CD8-positive, alpha-beta T cell (primary cell): ENCODE measurements at regions of chr15 and their contacts with region 1.

Region 1: GRCh38 chr15:82900511-82901060 is 51.9 kb downstream of the HOMER2 start:
- DNase-seq: no peak
- ATAC-seq: no peak
- H3K4me3 ChIP-seq: no peak overlapping the region
- H3K4me3 Mint-ChIP-seq: no peak overlapping the region
- H3K27ac ChIP-seq: no peak overlapping the region
- H3K27ac Mint-ChIP-seq: no peak overlapping the region
- H3K4me1 ChIP-seq: no peaks in the 10 kb centered on the region
- H3K4me1 Mint-ChIP-seq: no peaks in the 10 kb centered on the region
- H3K27me3 ChIP-seq: no peaks in the 10 kb centered on the region
- H3K27me3 Mint-ChIP-seq: no peaks in the 10 kb centered on the region
- CTCF ChIP-seq: no peak

Region 2: DNA sequence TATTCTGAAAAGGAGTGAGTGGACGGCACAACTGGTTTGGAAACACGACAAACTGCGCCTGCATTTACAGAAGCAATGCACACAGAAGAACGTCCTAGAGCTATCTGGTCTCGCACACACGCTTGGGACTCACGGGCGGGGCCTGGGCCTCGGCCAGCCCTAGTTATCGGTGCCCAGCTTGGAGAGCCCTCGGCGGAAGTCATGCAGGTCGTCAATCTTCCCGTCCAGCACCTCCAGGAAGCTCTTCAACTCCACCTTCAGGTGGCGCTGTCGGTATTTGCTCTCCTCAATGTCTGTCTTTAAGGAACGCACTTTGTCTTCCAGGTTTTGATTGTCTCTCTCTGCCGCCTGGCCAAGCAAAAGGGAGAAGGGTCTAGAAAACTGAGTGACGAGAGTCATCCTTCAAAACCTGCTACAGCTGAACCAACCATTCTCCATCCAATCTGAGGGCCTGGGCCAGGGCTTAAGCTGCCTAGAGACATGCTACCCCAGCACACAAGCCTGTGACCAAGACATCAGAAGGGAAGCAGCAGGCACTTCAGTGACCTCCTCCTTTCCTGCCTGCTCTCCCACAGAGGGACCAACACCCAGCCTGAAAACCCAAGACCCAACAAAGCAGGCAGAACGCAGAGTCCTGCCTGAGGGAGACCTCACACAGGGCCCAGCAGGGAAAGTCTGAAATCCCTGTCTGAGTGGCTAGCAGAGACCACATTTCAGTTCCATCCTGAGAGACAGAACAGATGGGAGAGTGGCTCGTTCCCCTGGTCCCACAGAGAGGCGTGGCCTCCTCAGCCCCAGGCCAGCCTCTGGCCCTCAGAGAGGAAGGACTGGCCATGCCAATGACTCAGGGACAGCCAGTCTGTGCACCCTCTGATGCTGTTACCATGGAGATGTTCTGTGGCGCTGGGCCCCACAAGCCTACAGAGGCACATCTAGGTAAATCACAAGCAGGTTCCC is 50.8 kb before region 1 on chr15:
- CTCF ChIA-PET with region 1: no interaction called
- POLR2A ChIA-PET with region 1: no interaction called
- intact Hi-C with region 1: loop called in 1 of 2 experiments (anchors 10 kb)
- DNase-seq: peak in 7 of 9 experiments; percentile 15 to 66 (median 41)
- ATAC-seq: peak; percentile 41
- H3K4me3 ChIP-seq: no peak overlapping the region
- H3K4me3 Mint-ChIP-seq: no peak overlapping the region
- H3K27ac ChIP-seq: no peak overlapping the region
- H3K27ac Mint-ChIP-seq: no peak overlapping the region
- H3K4me1 ChIP-seq: peaks cover 20% of the 10 kb centered on the region
- H3K4me1 Mint-ChIP-seq: peaks cover 21% of the 10 kb centered on the region
- H3K27me3 ChIP-seq: no peaks in the 10 kb centered on the region
- H3K27me3 Mint-ChIP-seq: no peaks in the 10 kb centered on the region
- CTCF ChIP-seq: peak; percentile 23

Region 3: GRCh38 chr15:82882273-82882928 is 18.2 kb before region 1 on chr15:
- CTCF ChIA-PET with region 1: no interaction called
- POLR2A ChIA-PET with region 1: no interaction called
- intact Hi-C with region 1: no loop called
- DNase-seq: no peak
- ATAC-seq: no peak
- H3K4me3 ChIP-seq: no peak overlapping the region
- H3K4me3 Mint-ChIP-seq: no peak overlapping the region
- H3K27ac ChIP-seq: no peak overlapping the region
- H3K27ac Mint-ChIP-seq: no peak overlapping the region
- H3K4me1 ChIP-seq: no peaks in the 10 kb centered on the region
- H3K4me1 Mint-ChIP-seq: no peaks in the 10 kb centered on the region
- H3K27me3 ChIP-seq: no peaks in the 10 kb centered on the region
- H3K27me3 Mint-ChIP-seq: no peaks in the 10 kb centered on the region
- CTCF ChIP-seq: no peak

Region 4: DNA sequence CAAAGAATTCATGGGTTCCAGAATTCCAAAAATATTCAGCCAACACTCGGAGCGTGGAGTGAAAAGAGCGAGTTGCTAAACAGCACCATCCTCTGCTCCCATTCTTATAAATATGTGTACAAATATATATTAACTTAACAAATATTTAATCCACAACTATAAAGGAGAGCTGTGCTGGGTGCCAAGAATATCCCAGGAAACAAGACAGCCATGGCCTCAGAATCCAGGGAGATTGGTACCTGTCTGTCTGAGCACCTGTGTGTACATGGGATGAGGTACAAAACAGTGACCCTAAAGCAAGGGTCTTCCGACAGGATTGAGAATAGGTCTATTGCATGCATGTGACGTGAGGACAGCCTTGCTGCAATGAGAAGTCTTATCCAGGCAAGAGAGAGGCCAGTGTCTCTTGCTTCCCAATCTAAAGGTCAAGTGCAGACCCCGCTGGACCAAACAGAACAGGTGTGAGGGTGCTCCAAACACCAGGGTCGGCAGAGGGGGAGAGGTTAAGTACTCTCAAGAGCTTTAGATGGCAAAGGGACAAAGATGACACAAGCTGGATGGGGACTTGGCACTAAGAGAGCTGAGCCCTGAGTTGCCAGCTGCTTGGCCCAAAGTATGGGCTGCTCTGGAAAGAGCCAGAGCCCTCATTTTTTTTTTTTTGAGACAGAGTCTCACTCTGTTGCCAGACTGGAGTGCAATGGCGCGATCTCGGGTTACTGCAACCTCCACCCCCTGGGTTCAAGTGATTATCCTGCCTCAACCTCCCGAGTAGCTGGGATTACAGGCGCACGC is 15.8 kb after region 1 on chr15:
- CTCF ChIA-PET with region 1: no interaction called
- POLR2A ChIA-PET with region 1: no interaction called
- intact Hi-C with region 1: no loop called
- DNase-seq: no peak
- ATAC-seq: no peak
- H3K4me3 ChIP-seq: no peak overlapping the region
- H3K4me3 Mint-ChIP-seq: no peak overlapping the region
- H3K27ac ChIP-seq: no peak overlapping the region
- H3K27ac Mint-ChIP-seq: no peak overlapping the region
- H3K4me1 ChIP-seq: no peaks in the 10 kb centered on the region
- H3K4me1 Mint-ChIP-seq: no peaks in the 10 kb centered on the region
- H3K27me3 ChIP-seq: no peaks in the 10 kb centered on the region
- H3K27me3 Mint-ChIP-seq: no peaks in the 10 kb centered on the region
- CTCF ChIP-seq: no peak

Region 5: GRCh38 chr15:82966671-82967071 is 66.1 kb after region 1 on chr15:
- CTCF ChIA-PET with region 1: no interaction called
- POLR2A ChIA-PET with region 1: no interaction called
- intact Hi-C with region 1: loop called in 1 of 2 experiments (anchors 10 kb)
- DNase-seq: no peak
- ATAC-seq: no peak
- H3K4me3 ChIP-seq: no peak overlapping the region
- H3K4me3 Mint-ChIP-seq: no peak overlapping the region
- H3K27ac ChIP-seq: no peak overlapping the region
- H3K27ac Mint-ChIP-seq: no peak overlapping the region
- H3K4me1 ChIP-seq: no peaks in the 10 kb centered on the region
- H3K4me1 Mint-ChIP-seq: peaks cover 7% of the 10 kb centered on the region
- H3K27me3 ChIP-seq: no peaks in the 10 kb centered on the region
- H3K27me3 Mint-ChIP-seq: no peaks in the 10 kb centered on the region
- CTCF ChIP-seq: no peak

Region 6: GRCh38 chr15:83046558-83047127 is 146.1 kb after region 1 on chr15:
- CTCF ChIA-PET with region 1: no interaction called
- POLR2A ChIA-PET with region 1: no interaction called
- intact Hi-C with region 1: no loop called
- DNase-seq: no peak
- ATAC-seq: no peak
- H3K4me3 ChIP-seq: no peak overlapping the region
- H3K4me3 Mint-ChIP-seq: no peak overlapping the region
- H3K27ac ChIP-seq: no peak overlapping the region
- H3K27ac Mint-ChIP-seq: peak overlapping the region; percentile 19
- H3K4me1 ChIP-seq: no peaks in the 10 kb centered on the region
- H3K4me1 Mint-ChIP-seq: peaks cover 27% of the 10 kb centered on the region
- H3K27me3 ChIP-seq: no peaks in the 10 kb centered on the region
- H3K27me3 Mint-ChIP-seq: no peaks in the 10 kb centered on the region
- CTCF ChIP-seq: no peak

Region 7: GRCh38 chr15:83380682-83381081 is 480.1 kb after region 1 on chr15:
- CTCF ChIA-PET with region 1: no interaction called
- POLR2A ChIA-PET with region 1: no interaction called
- intact Hi-C with region 1: no loop called
- DNase-seq: peak in 2 of 9 experiments; percentile 13 to 14
- ATAC-seq: no peak
- H3K4me3 ChIP-seq: no peak overlapping the region
- H3K4me3 Mint-ChIP-seq: no peak overlapping the region
- H3K27ac ChIP-seq: no peak overlapping the region
- H3K27ac Mint-ChIP-seq: no peak overlapping the region
- H3K4me1 ChIP-seq: no peaks in the 10 kb centered on the region
- H3K4me1 Mint-ChIP-seq: no peaks in the 10 kb centered on the region
- H3K27me3 ChIP-seq: peaks cover 0 to 13% of the 10 kb centered on the region in 2 experiments
- H3K27me3 Mint-ChIP-seq: peaks cover 40% of the 10 kb centered on the region
- CTCF ChIP-seq: no peak